Posterior vena cava (tissue), 2 donors: ENCODE measurements at regions of chr13 and their contacts with region 1.

Region 1: GRCh38 chr13:91101381-91101780 is 246.1 kb upstream of the MIR17HG start:
- DNase-seq: no peak

Region 2: GRCh38 chr13:90258129-90258528 is 843.3 kb before region 1 on chr13:
- intact Hi-C with region 1: loop called in 1 of 2 experiments (anchors 5 kb)
- DNase-seq: no peak

Region 3: GRCh38 chr13:91017031-91017668 is 84.2 kb before region 1 on chr13:
- intact Hi-C with region 1: no loop called
- DNase-seq: no peak

Region 4: GRCh38 chr13:91216928-91217690 is 115.7 kb after region 1 on chr13:
- intact Hi-C with region 1: no loop called
- DNase-seq: no peak